Activated B cell treated with CpG ODN at 0.5 μM for 24 hours (primary cell): ENCODE measurements at regions of chr3 and their contacts with region 1.

Region 1: GRCh38 chr3:58630076-58630709 is 36.4 kb downstream of the FAM3D start:
- DNase-seq: peak; percentile 29
- ATAC-seq: peak; percentile 76
- H3K4me3 Mint-ChIP-seq: no peak overlapping the region
- H3K27ac Mint-ChIP-seq: no peak overlapping the region
- H3K4me1 Mint-ChIP-seq: peaks cover 1% of the 10 kb centered on the region
- H3K27me3 Mint-ChIP-seq: peaks cover 5% of the 10 kb centered on the region
- CTCF ChIP-seq: peak; percentile 96

Region 2: GRCh38 chr3:58463181-58463941 is 166.8 kb before region 1 on chr3:
- CTCF ChIA-PET with region 1: no interaction called
- POLR2A ChIA-PET with region 1: no interaction called
- intact Hi-C with region 1: no loop called
- DNase-seq: peak; percentile 41
- ATAC-seq: peak; percentile 96
- H3K4me3 Mint-ChIP-seq: peak overlapping the region; percentile 47
- H3K27ac Mint-ChIP-seq: no peak overlapping the region
- H3K4me1 Mint-ChIP-seq: peaks cover 10% of the 10 kb centered on the region
- H3K27me3 Mint-ChIP-seq: no peaks in the 10 kb centered on the region
- CTCF ChIP-seq: peak; percentile 37

Region 3: DNA sequence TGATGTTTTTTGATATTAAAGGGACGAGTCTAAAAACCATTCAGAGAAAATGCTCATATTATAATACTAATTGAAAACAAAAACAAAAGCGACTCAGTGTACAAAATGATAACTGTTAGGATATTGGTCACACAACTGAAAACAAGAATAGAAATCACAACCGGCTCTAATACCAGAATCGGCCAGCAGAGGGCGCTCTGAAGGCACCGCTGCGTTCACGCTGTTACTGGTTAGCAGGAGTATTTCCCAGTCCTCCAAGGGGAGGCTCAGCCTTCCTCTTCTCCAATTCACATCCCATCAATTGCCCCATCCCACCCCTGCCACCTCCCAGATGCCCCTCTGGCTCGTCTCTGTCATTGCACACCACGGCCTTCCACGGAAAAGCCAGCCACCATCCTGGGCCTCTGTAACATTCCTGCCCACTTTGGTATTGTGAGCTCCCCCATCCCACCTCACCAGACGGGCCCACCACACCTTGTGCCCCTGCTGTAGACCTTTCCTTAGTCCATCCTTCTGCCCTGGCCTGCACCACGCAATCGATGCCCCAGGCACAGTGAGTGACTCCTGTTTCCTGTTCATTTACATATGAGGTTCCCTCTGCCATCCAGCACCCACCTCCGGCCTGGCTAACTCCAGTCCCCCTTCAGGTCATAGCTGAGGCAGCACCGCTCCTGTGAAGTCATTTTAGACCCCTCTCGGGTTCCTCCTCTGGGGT is 61.5 kb before region 1 on chr3:
- CTCF ChIA-PET with region 1: interaction called, 65 read pairs
- POLR2A ChIA-PET with region 1: no interaction called
- intact Hi-C with region 1: loop called (anchors 1 kb)
- DNase-seq: peak; percentile 61
- ATAC-seq: peak; percentile 49
- H3K4me3 Mint-ChIP-seq: peak overlapping the region; percentile 65
- H3K27ac Mint-ChIP-seq: no peak overlapping the region
- H3K4me1 Mint-ChIP-seq: peaks cover 6% of the 10 kb centered on the region
- H3K27me3 Mint-ChIP-seq: no peaks in the 10 kb centered on the region
- CTCF ChIP-seq: no peak

Region 4: DNA sequence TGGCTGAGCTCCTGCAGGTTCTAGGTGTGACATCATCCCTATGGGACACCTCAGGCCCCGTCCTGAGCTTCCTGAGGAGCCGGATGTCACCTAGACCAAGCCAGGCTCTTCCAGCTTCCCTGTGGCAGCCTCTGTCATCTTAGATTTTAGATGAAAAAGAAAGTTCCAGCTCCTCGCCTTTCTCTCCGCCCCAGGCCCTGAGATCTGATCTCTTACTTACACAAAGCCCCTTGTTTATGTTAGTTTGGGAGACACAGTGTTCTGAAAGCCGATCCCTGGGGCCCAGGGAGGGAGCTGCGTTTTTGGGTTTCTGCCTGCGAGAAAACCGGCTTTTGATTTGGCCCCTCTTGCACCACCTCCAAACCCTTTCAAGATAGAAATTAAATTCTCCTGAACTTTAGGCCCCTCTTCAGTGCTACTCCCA is 12.8 kb before region 1 on chr3:
- CTCF ChIA-PET with region 1: interaction called, 16 read pairs
- POLR2A ChIA-PET with region 1: no interaction called
- intact Hi-C with region 1: no loop called
- DNase-seq: no peak
- ATAC-seq: no peak
- H3K4me3 Mint-ChIP-seq: no peak overlapping the region
- H3K27ac Mint-ChIP-seq: no peak overlapping the region
- H3K4me1 Mint-ChIP-seq: no peaks in the 10 kb centered on the region
- H3K27me3 Mint-ChIP-seq: peaks cover 2% of the 10 kb centered on the region
- CTCF ChIP-seq: no peak